Posterior vena cava (tissue), 2 donors: ENCODE measurements at regions of chr7 and their contacts with region 1.

Region 1: GRCh38 chr7:47179812-47180515 is 401.9 kb downstream of the TNS3 start:
- DNase-seq: peak; percentile 69

Region 2: DNA sequence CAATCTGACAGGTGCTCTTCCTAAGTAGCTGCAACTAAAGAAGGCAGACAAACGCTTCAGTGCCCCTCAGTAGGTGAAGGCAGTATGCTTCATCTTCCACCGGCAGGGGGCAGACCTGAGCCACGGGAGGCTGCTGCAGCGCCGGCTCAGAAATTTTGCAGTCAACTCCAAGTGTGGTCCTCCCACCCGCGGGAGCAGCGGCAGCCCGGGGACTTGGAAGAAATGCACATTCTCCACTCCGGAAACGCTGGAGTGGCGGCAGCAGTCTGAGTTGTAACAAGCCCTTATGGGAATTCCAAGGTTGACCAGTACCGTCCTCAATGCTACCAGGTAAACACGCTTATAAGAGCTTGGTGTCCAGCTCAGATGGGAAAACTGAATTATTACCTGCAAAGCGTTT is 1262.3 kb before region 1 on chr7:
- intact Hi-C with region 1: loop called (anchors 2 to 10 kb)
- DNase-seq: peak; percentile 94

Region 3: DNA sequence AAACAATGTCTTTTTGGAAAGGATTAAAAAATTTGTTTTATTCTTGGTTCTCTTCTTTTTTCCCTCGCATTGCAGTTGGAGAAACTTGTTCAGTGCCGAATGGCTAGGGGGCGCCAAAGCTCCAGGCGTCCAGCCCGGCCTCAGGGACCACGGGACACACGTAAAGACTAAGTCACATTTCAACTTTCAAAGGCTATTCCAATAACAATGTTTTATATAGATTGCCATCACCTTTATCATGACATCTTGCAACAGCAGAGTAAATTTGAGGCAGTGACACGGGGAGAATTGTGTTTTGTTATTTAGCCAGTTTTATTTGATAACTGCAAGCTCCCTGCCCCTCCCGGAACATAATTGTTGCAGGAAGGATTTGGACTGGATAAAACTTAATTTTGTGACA is 1256.7 kb before region 1 on chr7:
- intact Hi-C with region 1: loop called (anchors 2 to 10 kb)
- DNase-seq: peak; percentile 94

Region 4: DNA sequence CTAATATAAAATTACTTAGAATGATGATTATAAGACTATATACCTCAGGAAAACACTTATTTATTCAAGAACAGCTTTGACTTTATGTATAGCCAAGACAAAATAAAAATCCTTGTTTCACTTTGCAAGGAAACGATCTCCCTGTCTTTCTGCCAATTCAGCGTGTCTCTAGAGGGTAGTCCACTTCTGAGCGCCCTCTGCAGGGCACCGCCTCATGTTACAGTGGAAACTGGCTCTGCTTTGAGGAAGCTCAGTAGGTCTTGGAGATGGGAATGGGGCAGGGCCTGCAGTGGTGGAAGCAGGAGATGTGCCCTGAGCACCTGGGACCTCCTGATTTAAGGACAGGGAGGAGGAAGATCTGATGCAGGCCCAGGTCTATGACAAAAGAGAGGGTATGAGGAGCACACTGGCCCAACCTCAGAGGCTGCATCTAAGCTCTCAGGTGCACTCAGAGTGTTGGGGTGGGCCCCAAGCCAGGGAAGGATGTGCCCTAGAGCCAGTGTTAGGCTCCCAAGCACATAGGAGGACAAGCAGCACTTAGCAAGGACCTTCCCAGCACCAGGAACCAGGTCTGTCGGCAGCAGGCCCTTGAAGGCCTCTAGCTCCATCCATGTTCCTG is 79.0 kb before region 1 on chr7:
- intact Hi-C with region 1: loop called (anchors 10 kb)
- DNase-seq: no peak